Caco-2 (cell line): ENCODE measurements at regions of chr16 and their contacts with region 1.

Region 1: DNA sequence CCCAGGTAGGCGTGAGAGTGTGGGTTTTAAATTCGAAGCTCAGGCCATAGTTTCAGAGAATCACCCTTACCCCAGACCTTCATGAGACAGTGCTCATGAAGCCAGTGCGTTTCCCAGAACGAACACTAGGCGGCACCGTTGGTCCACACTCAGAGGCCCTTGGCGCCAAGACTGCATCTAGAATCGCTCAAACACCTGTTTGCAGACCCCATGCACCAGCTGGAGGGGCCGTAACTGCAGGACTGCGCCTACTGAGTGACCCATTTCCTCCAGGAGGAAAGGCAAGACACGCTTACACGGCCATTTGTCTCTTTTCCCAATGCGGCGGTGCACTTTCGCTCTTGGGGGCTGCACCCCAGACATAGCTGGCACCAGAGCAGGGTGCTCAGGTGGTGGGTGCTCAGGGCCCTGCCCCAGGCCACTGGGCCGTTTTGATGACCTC is 34.0 kb downstream of the ADGRG5 start:
- DNase-seq: peak; percentile 74 to 82
- H3K4me3 ChIP-seq: no peak overlapping the region
- H3K4me3 Mint-ChIP-seq: no peak overlapping the region
- H3K27ac Mint-ChIP-seq: no peak overlapping the region
- H3K4me1 ChIP-seq: 0 out of 2 replicates have a peak, but pooled peaks cover 4% of the 10 kb centered on the region
- H3K4me1 Mint-ChIP-seq: no peaks in the 10 kb centered on the region
- H3K27me3 ChIP-seq: no peaks in the 10 kb centered on the region
- H3K27me3 Mint-ChIP-seq: no peaks in the 10 kb centered on the region
- CTCF ChIP-seq: peak; percentile 97

Region 2: GRCh38 chr16:57475711-57476339 is 100.6 kb before region 1 on chr16:
- CTCF ChIA-PET with region 1: no interaction called
- POLR2A ChIA-PET with region 1: no interaction called
- intact Hi-C with region 1: no loop called
- DNase-seq: peak; percentile 69 to 71
- H3K4me3 ChIP-seq: no peak overlapping the region
- H3K4me3 Mint-ChIP-seq: no peak overlapping the region
- H3K27ac Mint-ChIP-seq: no peak overlapping the region
- H3K4me1 ChIP-seq: peaks cover 48% of the 10 kb centered on the region
- H3K4me1 Mint-ChIP-seq: peaks cover 36% of the 10 kb centered on the region
- H3K27me3 ChIP-seq: no peaks in the 10 kb centered on the region
- H3K27me3 Mint-ChIP-seq: no peaks in the 10 kb centered on the region
- CTCF ChIP-seq: peak; percentile 51 to 54

Region 3: GRCh38 chr16:57591086-57591869 is 14.8 kb after region 1 on chr16:
- CTCF ChIA-PET with region 1: interaction called, 13 read pairs
- POLR2A ChIA-PET with region 1: no interaction called
- intact Hi-C with region 1: loop called (anchors 1 kb)
- DNase-seq: peak; percentile 78 to 89
- H3K4me3 ChIP-seq: no peak overlapping the region
- H3K4me3 Mint-ChIP-seq: no peak overlapping the region
- H3K27ac Mint-ChIP-seq: peak overlapping the region; percentile 29
- H3K4me1 ChIP-seq: peaks cover 10% of the 10 kb centered on the region
- H3K4me1 Mint-ChIP-seq: peaks cover 8% of the 10 kb centered on the region
- H3K27me3 ChIP-seq: no peaks in the 10 kb centered on the region
- H3K27me3 Mint-ChIP-seq: no peaks in the 10 kb centered on the region
- CTCF ChIP-seq: peak; percentile 97

Region 4: DNA sequence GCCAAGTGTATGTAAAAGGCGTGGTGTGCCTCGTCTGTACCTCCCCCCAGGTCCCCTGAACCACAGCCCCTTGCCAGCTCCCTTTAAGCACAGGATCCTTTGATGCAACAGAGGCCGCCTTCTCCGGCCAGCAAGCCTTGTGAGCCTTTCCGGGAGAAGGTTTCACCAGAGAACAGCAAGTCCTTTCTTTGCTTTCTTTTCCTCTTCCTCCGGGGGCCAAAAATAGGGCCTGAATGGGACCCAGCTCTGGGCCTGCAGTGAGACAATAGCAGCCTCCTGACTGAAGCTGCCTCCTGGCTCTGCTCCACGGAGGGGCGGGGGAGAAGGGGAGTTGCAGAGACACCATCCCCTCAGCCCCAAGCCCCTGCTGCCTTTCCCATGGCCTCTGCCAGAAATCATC is 61.0 kb after region 1 on chr16:
- CTCF ChIA-PET with region 1: interaction called, 11 read pairs
- POLR2A ChIA-PET with region 1: no interaction called
- intact Hi-C with region 1: no loop called
- DNase-seq: no peak
- H3K4me3 ChIP-seq: no peak overlapping the region
- H3K4me3 Mint-ChIP-seq: no peak overlapping the region
- H3K27ac Mint-ChIP-seq: no peak overlapping the region
- H3K4me1 ChIP-seq: peaks cover 18% of the 10 kb centered on the region
- H3K4me1 Mint-ChIP-seq: peaks cover 11% of the 10 kb centered on the region
- H3K27me3 ChIP-seq: no peaks in the 10 kb centered on the region
- H3K27me3 Mint-ChIP-seq: no peaks in the 10 kb centered on the region
- CTCF ChIP-seq: no peak

Region 5: DNA sequence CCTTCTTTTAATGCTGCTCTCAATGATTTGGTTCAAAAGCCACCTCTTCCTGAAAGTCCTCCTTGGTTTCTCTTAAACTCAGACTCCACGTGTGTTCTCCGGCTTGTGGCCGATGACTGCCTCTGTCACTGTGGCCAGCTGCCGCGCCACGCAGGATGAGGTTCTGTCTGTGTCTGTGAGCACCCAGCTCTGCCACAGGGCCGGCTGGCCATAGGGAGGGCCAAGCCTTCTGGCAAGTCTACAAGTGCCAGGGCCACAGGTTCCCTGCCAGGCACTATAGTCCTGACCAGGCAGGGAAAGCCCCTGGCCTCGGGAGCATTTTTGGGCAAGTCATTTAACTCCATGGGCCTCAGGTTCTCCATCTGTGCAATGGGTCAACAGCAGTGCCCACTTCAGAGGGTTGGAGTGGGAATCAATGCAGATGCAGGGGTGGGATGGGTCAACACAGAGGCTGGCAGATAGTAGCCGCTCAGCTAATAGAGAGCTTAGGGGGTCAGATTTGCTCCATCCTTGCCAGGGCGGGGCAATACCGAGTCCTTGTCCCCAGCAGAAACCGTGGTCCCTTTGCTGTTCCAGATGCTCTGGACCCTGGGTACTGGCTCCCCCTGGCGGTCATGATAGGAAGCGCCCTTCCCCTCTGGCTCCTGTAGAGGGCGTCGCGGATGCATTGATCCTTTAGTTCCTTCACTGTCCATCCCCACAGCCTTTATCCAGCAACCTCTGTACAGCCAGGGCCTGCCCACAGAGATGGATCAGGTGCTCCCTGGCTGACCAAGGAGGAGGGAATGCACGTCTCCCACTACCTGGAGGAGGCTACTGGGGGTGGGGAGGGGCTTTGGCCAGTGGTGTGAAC is 72.4 kb after region 1 on chr16:
- CTCF ChIA-PET with region 1: interaction called, 8 read pairs
- POLR2A ChIA-PET with region 1: no interaction called
- intact Hi-C with region 1: loop called (anchors 1 kb)
- DNase-seq: peak; percentile 85 to 93
- H3K4me3 ChIP-seq: no peak overlapping the region
- H3K4me3 Mint-ChIP-seq: no peak overlapping the region
- H3K27ac Mint-ChIP-seq: no peak overlapping the region
- H3K4me1 ChIP-seq: peaks cover 10% of the 10 kb centered on the region; the same call in 1 of the 2 replicates
- H3K4me1 Mint-ChIP-seq: peaks cover 14% of the 10 kb centered on the region
- H3K27me3 ChIP-seq: no peaks in the 10 kb centered on the region
- H3K27me3 Mint-ChIP-seq: no peaks in the 10 kb centered on the region
- CTCF ChIP-seq: peak; percentile 100

Region 6: DNA sequence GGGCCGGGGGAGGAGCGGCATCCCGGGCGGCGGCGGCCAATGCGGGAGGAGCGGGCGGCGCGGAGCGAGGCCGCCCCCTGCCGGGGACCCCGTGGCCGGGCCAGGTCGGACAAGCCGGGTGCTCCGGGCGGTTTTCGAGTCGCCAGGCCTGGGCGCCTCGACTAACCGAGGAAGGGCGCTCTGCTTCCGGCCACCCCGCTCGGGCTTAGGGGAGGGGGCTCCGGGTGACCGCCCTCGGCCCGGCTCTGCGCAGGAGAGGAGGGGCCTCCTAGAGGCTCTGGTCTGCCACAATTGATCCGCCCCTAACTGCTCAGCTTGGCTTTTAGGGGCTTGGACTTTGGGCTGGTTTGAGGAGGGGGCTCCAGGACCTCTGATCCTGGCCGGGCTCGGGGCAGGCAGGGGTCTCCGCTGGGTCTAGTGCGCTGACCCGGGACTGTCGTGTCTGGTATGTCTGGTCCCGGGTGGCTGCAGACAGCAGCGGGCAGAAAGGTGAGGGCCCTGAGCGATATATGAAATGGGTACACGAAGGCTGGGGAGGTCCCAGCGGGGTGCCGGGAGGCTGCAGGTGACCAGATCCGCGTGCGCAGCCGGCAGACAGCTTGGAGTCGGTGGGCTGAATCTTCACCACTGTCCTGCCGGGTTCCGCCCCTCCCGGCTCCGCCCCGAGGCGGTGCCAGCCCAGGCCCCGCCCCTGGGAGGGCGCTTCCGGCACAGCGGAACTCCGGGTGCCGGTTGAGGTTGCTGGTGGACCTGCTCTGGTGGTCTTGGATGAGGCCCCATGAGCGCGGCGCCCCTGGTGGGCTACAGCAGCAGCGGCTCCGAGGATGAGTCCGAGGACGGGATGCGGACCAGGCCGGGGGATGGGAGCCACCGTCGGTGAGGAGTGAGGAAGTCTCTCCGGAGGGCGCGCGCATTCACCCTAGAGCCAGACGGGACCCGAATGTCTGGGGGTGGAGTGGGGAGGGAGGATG is 424.5 kb after region 1 on chr16 and contains the start of gene USB1:
- CTCF ChIA-PET with region 1: interaction called, 3 read pairs
- POLR2A ChIA-PET with region 1: no interaction called
- intact Hi-C with region 1: loop called (anchors 2 kb)
- DNase-seq: peak; percentile 92 to 97
- H3K4me3 ChIP-seq: peak within 1 kb of the TSS; percentile 88
- H3K4me3 Mint-ChIP-seq: peak within 1 kb of the TSS; percentile 96
- H3K27ac Mint-ChIP-seq: peak within 1 kb of the TSS; percentile 73
- H3K4me1 ChIP-seq: peaks cover 17% of the 10 kb centered on the region
- H3K4me1 Mint-ChIP-seq: no peaks in the 10 kb centered on the region
- H3K27me3 ChIP-seq: no peaks in the 10 kb centered on the region
- H3K27me3 Mint-ChIP-seq: no peaks in the 10 kb centered on the region
- CTCF ChIP-seq: peak; percentile 76 to 97
- total RNA-seq, gene USB1: 90.5 and 91.2 TPM in 2 replicates